Caco-2 (cell line): ENCODE measurements at regions of chr10 and their contacts with region 1.

Region 1: GRCh38 chr10:69232252-69232651 is 12.1 kb downstream of the HKDC1 start:
- DNase-seq: peak; percentile 56 to 75
- H3K4me3 ChIP-seq: no peak overlapping the region
- H3K4me3 Mint-ChIP-seq: peak overlapping the region; percentile 1
- H3K27ac Mint-ChIP-seq: peak overlapping the region; percentile 28
- H3K4me1 ChIP-seq: peaks cover 40% of the 10 kb centered on the region
- H3K4me1 Mint-ChIP-seq: peaks cover 15% of the 10 kb centered on the region
- H3K27me3 ChIP-seq: no peaks in the 10 kb centered on the region
- H3K27me3 Mint-ChIP-seq: no peaks in the 10 kb centered on the region
- CTCF ChIP-seq: no peak

Region 2: DNA sequence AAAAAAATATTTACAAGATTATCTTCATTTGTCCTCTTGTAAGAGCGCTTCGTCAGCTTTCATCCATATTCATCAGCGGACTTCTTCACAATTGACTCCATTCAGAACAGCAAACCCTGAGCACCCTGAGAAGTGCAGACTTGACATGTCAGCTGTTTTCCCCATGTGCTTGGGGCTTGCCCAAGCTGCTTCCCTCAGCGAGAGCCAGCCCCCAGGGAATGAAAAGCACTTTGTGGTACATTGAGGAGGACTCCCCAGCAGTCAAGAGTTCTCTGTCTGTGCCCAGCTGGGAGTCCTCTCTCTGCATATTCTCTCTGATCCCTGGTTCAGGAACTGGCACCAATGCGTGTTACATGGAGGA is 10.6 kb after region 1 on chr10:
- CTCF ChIA-PET with region 1: no interaction called
- POLR2A ChIA-PET with region 1: interaction called, 10 read pairs
- intact Hi-C with region 1: no loop called
- DNase-seq: no peak
- H3K4me3 ChIP-seq: no peak overlapping the region
- H3K4me3 Mint-ChIP-seq: no peak overlapping the region
- H3K27ac Mint-ChIP-seq: no peak overlapping the region
- H3K4me1 ChIP-seq: no peaks in the 10 kb centered on the region
- H3K4me1 Mint-ChIP-seq: no peaks in the 10 kb centered on the region
- H3K27me3 ChIP-seq: no peaks in the 10 kb centered on the region
- H3K27me3 Mint-ChIP-seq: no peaks in the 10 kb centered on the region
- CTCF ChIP-seq: no peak

Region 3: DNA sequence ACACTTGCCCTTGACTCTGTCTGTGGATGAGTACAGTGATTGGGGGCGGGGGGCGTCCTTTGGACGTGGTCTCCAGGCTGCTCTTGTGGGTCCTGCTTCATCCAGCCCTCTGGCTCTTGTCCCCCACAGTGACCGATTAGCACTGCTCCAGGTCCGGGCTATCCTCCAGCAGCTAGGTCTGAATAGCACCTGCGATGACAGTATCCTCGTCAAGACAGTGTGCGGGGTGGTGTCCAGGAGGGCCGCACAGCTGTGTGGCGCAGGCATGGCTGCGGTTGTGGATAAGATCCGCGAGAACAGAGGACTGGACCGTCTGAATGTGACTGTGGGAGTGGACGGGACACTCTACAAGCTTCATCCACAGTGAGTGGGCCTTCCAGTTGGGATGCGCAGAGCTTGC is 166.2 kb after region 1 on chr10:
- CTCF ChIA-PET with region 1: no interaction called
- POLR2A ChIA-PET with region 1: no interaction called
- intact Hi-C with region 1: no loop called
- DNase-seq: no peak
- H3K4me3 ChIP-seq: no peak overlapping the region
- H3K4me3 Mint-ChIP-seq: no peak overlapping the region
- H3K27ac Mint-ChIP-seq: no peak overlapping the region
- H3K4me1 ChIP-seq: no peaks in the 10 kb centered on the region
- H3K4me1 Mint-ChIP-seq: no peaks in the 10 kb centered on the region
- H3K27me3 ChIP-seq: no peaks in the 10 kb centered on the region
- H3K27me3 Mint-ChIP-seq: no peaks in the 10 kb centered on the region
- CTCF ChIP-seq: no peak